ENCODE measurements at regions of chr4 and their contacts with region 1.

Region 1: DNA sequence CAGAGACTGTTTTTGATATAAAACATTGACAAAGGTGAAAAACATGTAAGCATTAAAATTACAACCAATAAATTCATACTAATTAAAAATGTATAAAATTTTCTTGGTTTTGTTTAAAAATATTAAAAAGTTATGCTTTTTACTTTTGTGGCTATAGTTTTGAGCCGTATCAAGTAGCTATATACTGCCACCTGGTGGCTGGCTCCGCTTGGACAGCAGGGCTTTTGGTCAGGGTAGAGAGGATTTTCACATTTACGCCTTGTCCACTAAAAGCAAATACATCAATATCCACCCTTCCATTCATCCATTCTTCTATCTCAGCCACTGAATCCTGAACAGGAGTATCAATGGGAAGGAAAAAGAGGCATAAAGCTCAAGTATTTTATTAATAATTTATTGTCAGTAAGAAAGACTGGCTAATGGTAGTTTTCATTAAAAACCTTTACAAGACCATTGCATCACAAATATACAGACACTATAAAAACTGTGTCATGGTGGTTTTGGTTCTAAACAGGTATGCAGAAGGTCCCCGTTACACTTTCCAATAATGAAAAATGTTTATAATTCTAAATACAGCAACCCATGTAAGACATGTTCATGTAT is 32.1 kb upstream of the MTNR1A start:
- DNase-seq: peak; percentile 89

Region 2: DNA sequence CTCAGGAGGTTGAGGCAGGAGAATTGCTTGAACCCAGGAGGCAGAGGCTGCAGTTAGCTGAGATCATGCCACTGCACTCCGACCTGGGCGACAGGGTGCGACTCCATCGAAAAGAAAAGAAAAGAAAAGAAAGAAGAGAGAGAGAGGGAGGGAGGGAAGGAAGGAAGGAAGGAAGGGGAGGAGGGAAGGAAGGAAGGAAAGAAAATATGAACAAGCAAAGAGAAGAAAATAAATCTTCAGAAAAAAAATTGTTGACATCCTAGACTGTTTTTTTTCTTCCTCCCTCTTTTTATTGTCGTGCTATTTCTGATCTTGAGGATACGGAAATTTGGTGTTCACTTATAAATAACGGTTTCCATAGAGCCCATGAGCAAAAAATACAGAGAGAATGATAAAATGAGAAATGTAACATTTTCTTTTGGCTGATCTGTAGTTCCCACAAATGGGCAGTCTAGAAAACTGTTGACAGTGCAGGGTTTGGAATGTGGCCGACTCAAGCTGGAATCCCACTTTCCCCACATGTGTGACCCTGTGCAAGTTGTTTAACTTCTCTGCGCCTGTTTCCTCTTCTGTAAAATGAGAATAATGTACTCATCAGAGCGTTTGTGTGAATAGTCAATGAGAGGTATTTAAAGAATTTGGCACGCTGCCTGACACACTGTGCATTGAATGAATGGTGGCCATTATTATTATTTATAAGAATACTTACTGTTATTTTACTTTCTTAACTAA is 795.0 kb before region 1 on chr4:
- intact Hi-C with region 1: no loop called
- DNase-seq: no peak

Region 3: DNA sequence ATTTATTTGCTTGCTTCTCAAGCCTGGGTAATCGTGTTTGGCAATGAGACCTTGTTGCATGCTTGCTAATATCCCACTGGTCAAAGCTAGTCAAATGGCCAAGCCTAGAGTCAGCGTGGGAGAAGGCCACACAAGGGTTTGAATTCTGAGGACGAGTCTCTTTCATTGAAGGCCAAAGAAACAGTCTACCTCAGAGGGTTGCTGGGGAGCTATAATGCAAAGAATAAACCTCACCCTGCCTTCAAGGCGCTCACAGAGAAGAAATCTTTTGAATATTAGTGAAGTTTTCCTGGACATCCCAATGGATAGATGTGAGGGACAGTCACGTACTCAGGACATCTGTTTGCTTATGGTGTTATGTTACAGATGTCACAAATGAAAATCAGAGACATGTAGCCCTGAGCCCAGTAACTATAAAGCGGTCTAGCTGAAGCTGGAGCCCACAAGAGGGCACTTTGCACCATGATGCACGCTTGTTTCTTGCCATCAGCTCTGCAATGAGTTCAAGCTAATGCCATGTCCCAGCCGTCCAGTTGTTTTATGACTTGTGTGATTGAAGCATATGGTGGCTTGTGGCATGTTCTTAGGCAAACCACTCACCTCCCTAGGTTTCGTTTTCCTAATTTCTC is 519.6 kb before region 1 on chr4:
- intact Hi-C with region 1: loop called in 1 of 2 experiments (anchors 5 kb)
- DNase-seq: no peak

Region 4: GRCh38 chr4:186297013-186297645 is 290.4 kb before region 1 on chr4:
- intact Hi-C with region 1: loop called (anchors 5 to 10 kb)
- DNase-seq: no peak